PC-3 (cell line): ENCODE measurements at regions of chr12 and their contacts with region 1.

Region 1: GRCh38 chr12:42325653-42326474 is at the starts of genes PPHLN1 and ZCRB1:
- DNase-seq: peak; percentile 82
- ATAC-seq: peak; percentile 92
- H3K4me3 ChIP-seq: peak within 1 kb of the TSS; percentile 76
- H3K27ac ChIP-seq: peak within 1 kb of the TSS; percentile 22
- H3K4me1 ChIP-seq: peaks cover 17% of the 10 kb centered on the region
- H3K27me3 ChIP-seq: no peaks in the 10 kb centered on the region
- CTCF ChIP-seq: no peak
- total RNA-seq, gene PPHLN1: 67.6 and 82.0 TPM in 2 replicates
- total RNA-seq, gene ZCRB1: 29.7 and 33.9 TPM in 2 replicates

Region 2: GRCh38 chr12:42144408-42145196 is 181.3 kb before region 1 on chr12 and contains the start of gene GXYLT1:
- CTCF ChIA-PET with region 1: no interaction called
- POLR2A ChIA-PET with region 1: no interaction called
- intact Hi-C with region 1: loop called (anchors 1 kb)
- DNase-seq: peak; percentile 97
- ATAC-seq: peak; percentile 93
- H3K4me3 ChIP-seq: peak within 1 kb of the TSS; percentile 86
- H3K27ac ChIP-seq: peak within 1 kb of the TSS; percentile 32
- H3K4me1 ChIP-seq: peaks cover 23% of the 10 kb centered on the region; the same call in 1 of the 2 replicates
- H3K27me3 ChIP-seq: no peaks in the 10 kb centered on the region
- CTCF ChIP-seq: no peak
- total RNA-seq, gene GXYLT1: 5.1 and 10.9 TPM in 2 replicates